ENCODE measurements at regions of chr5 and their contacts with region 1.

Region 1: GRCh38 chr5:163695830-163696578 is 190.6 kb downstream of the MAT2B start:
- DNase-seq: peak; percentile 89
- ATAC-seq: peak; percentile 99
- H3K4me3 ChIP-seq: no peak overlapping the region
- H3K27ac ChIP-seq: no peak overlapping the region
- H3K4me1 ChIP-seq: no peaks in the 10 kb centered on the region; the same call in 1 of the 2 replicates
- H3K27me3 ChIP-seq: no peaks in the 10 kb centered on the region
- CTCF ChIP-seq: peak; percentile 88
- POLR2A ChIP-seq: no peak; the same call in 1 of the 2 replicates
- RAD21 ChIP-seq: peak; percentile 98

Region 2: GRCh38 chr5:163564321-163564938 is 131.6 kb before region 1 on chr5:
- CTCF ChIA-PET with region 1: interaction called, 8 read pairs
- POLR2A ChIA-PET with region 1: no interaction called
- dilution Hi-C with region 1: no loop called
- in situ Hi-C with region 1: no loop called
- intact Hi-C with region 1: loop called (anchors 2 kb)
- DNase-seq: peak; percentile 69
- ATAC-seq: peak; percentile 68
- H3K4me3 ChIP-seq: no peak overlapping the region
- H3K27ac ChIP-seq: no peak overlapping the region
- H3K4me1 ChIP-seq: peaks cover 5% of the 10 kb centered on the region
- H3K27me3 ChIP-seq: no peaks in the 10 kb centered on the region
- CTCF ChIP-seq: peak; percentile 89
- POLR2A ChIP-seq: no peak
- RAD21 ChIP-seq: peak; percentile 91

Region 3: DNA sequence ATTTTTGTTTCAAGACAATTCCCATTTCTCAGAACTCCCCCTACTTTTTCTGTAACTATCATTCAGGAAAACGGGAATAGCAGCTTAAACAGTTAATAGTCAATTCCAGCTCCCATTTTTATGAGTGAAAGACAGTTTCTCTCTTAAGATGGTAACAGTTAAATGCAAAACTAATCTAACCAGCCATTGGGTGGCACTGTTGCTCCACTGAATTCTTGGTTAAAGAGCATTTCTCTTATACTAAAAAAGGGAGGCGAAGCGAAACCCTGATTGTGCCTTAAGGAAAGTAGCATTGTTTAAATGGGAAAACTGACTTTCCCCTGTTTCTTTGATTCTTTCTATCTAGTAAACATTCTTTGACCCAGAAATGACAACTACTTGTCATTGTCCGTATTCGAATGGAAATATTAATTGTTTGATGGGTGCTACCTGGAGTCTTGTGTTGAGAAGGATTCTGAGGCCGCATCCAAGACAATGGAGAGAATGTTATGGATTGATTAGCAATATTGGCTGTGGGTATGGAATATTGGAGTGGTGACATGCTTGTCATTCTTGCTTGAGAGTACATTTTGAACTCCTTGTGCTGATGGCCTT is 317.2 kb after region 1 on chr5:
- CTCF ChIA-PET with region 1: interaction called, 4 read pairs
- POLR2A ChIA-PET with region 1: no interaction called
- dilution Hi-C with region 1: no loop called
- in situ Hi-C with region 1: loop called (anchors 10 kb)
- intact Hi-C with region 1: loop called (anchors 1 kb)
- DNase-seq: peak; percentile 86
- ATAC-seq: peak; percentile 86
- H3K4me3 ChIP-seq: no peak overlapping the region
- H3K27ac ChIP-seq: no peak overlapping the region
- H3K4me1 ChIP-seq: no peaks in the 10 kb centered on the region
- H3K27me3 ChIP-seq: no peaks in the 10 kb centered on the region
- CTCF ChIP-seq: peak; percentile 84
- POLR2A ChIP-seq: no peak
- RAD21 ChIP-seq: peak; percentile 90

Region 4: DNA sequence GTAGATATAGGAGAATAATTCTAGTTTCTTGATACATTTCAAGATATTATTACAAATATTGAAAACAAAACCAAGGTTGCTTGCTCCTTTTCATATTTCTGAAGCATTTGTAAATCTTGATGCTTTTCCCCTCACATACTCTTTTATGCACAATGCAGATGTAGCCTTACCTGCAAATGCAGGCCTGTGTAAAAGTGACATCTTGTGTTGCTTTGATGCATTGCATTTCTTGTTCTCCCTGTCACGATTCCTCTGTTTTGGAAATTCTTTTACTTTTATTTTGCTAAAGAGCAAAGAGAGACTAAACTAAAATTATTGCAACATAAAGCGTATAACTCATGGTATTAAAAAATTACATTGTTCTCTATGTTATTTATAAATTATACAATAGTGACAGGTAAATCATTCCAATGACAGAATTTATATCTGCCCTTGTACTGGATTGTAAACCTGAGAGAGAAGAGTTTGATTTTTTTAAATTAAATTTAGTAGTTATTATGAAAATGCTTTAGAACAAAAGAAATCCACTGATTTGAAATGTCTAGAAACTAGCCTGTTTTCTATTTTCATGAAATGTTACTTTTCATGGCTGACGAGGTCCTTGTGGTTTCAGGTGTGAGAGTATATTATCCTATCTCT is 779.5 kb after region 1 on chr5:
- CTCF ChIA-PET with region 1: interaction called, 3 read pairs
- POLR2A ChIA-PET with region 1: no interaction called
- dilution Hi-C with region 1: no loop called
- in situ Hi-C with region 1: no loop called
- intact Hi-C with region 1: loop called (anchors 1 kb)
- DNase-seq: peak; percentile 56
- ATAC-seq: no peak
- H3K4me3 ChIP-seq: no peak overlapping the region
- H3K27ac ChIP-seq: no peak overlapping the region
- H3K4me1 ChIP-seq: no peaks in the 10 kb centered on the region
- H3K27me3 ChIP-seq: no peaks in the 10 kb centered on the region
- CTCF ChIP-seq: peak; percentile 63
- POLR2A ChIP-seq: no peak
- RAD21 ChIP-seq: peak; percentile 84

Region 5: GRCh38 chr5:164672931-164673694 is 977.1 kb after region 1 on chr5:
- CTCF ChIA-PET with region 1: no interaction called
- POLR2A ChIA-PET with region 1: no interaction called
- dilution Hi-C with region 1: no loop called
- in situ Hi-C with region 1: no loop called
- intact Hi-C with region 1: loop called (anchors 2 kb)
- DNase-seq: peak; percentile 17
- ATAC-seq: peak; percentile 69
- H3K4me3 ChIP-seq: no peak overlapping the region
- H3K27ac ChIP-seq: no peak overlapping the region
- H3K4me1 ChIP-seq: 0 out of 2 replicates have a peak, but pooled peaks cover 2% of the 10 kb centered on the region
- H3K27me3 ChIP-seq: no peaks in the 10 kb centered on the region
- CTCF ChIP-seq: peak; percentile 28
- POLR2A ChIP-seq: no peak
- RAD21 ChIP-seq: peak; percentile 16; the same call in 1 of the 2 replicates

Region 6: DNA sequence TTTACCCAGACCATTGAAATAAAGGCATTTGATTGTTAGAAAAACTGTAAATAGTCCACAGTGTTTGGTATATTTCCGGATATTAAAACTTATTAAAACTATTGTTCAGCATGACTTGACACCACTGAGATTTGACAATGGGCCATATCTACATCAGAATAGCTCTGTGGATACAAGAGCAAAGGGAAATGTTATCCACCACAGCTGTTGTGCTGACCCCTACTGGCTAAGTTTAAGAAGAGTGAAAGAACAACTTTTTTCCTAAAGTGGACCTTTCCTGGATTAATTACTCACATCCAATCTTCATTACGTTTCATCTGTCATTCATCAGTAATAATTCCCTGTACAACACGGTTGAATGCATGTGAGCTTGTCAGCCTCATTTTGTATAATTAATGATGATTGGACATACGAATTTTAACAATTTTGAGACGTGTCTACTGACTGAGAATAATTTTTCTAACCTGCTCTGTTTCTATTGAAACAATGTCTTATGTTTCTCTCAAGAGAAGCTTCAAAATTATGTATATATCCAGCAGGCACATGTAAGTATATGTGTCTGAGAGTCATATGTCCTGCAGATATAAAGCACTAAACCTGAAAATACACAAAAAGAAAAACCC is 1762.0 kb after region 1 on chr5:
- CTCF ChIA-PET with region 1: no interaction called
- POLR2A ChIA-PET with region 1: no interaction called
- dilution Hi-C with region 1: no loop called
- in situ Hi-C with region 1: no loop called
- intact Hi-C with region 1: loop called (anchors 5 kb)
- DNase-seq: peak; percentile 55
- ATAC-seq: peak; percentile 81
- H3K4me3 ChIP-seq: no peak overlapping the region
- H3K27ac ChIP-seq: no peak overlapping the region
- H3K4me1 ChIP-seq: no peaks in the 10 kb centered on the region
- H3K27me3 ChIP-seq: no peaks in the 10 kb centered on the region
- CTCF ChIP-seq: peak; percentile 54
- POLR2A ChIP-seq: no peak
- RAD21 ChIP-seq: peak; percentile 62